Sigmoid colon (tissue), 7 donors: ENCODE measurements at regions of chr19 and their contacts with region 1.

Region 1: GRCh38 chr19:45423589-45424190 is at the start of gene ERCC1:
- DNase-seq: peak; percentile 98
- H3K4me3 ChIP-seq: peak within 1 kb of the TSS; percentile 55 to 73 (median 61)
- H3K27ac ChIP-seq: peak within 1 kb of the TSS; percentile 80 to 92 (median 90)
- H3K4me1 ChIP-seq: peaks cover 0 to 41% (median 23%) of the 10 kb centered on the region in 4 donors
- H3K27me3 ChIP-seq: no peaks in the 10 kb centered on the region
- CTCF ChIP-seq: no peak
- EP300 ChIP-seq: no peak
- POLR2A ChIP-seq: peak; percentile 28 to 73
- total RNA-seq, gene ERCC1: 41.8 to 67.0 (median 64.4) TPM

Region 2: DNA sequence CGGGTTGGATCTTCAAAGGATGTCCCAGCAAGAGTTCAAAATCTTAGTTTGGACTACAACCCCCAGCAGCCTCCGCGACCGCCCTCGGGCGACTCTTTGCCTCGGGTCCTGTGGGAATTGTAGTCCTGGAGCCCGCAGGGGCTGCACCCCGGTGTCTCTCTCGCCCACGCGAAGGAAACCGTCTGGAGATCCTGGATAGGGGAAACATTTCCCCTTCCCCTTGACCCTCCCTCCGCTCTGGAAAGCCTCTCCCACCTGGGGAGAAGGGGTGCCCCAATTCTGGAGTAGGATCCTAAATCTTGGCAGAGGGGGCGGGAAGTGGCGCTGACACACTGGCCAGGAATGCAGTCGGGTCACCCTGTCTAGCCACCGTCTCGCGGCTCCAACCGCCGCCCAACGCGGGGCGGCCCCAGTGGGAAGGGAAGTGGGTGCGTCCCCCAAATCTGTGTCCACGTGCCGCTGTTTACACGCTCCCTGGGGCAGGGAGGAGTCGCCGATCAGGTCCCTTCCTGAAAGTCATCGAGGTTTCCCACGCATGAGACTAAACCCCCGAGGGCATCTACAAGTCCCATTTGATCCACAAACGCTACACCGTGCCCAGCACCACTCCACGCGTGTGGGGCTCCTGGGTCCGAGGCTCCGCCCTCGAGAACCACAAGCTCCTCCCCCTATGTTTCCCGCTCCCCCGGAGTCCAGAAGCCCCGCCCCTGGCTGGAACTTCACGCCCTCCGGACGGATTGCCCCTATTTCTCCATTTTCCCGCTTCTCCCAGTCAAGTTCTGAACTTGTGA is 18.1 kb before region 1 on chr19:
- intact Hi-C with region 1: loop called (anchors 2 kb)
- DNase-seq: peak; percentile 94
- H3K4me3 ChIP-seq: peak overlapping the region; percentile 48 to 67 (median 63)
- H3K27ac ChIP-seq: peak overlapping the region; percentile 85 to 95 (median 90)
- H3K4me1 ChIP-seq: peaks cover 2 to 38% (median 27%) of the 10 kb centered on the region in 4 donors
- H3K27me3 ChIP-seq: peaks cover 6 to 18% (median 9%) of the 10 kb centered on the region in 3 donors
- CTCF ChIP-seq: no peak
- EP300 ChIP-seq: no peak
- POLR2A ChIP-seq: peak in 1 of 2 donors; percentile 12

Region 3: GRCh38 chr19:45506246-45506990 is 82.7 kb after region 1 on chr19:
- intact Hi-C with region 1: no loop called
- DNase-seq: peak; percentile 98
- H3K4me3 ChIP-seq: peak overlapping the region; percentile 83 to 100 (median 100)
- H3K27ac ChIP-seq: peak overlapping the region; percentile 94 to 99 (median 98)
- H3K4me1 ChIP-seq: peaks cover 0 to 26% (median 24%) of the 10 kb centered on the region in 4 donors
- H3K27me3 ChIP-seq: peaks cover 0 to 4% (median 0%) of the 10 kb centered on the region in 3 donors
- CTCF ChIP-seq: peak in 1 of 4 experiments; percentile 26
- EP300 ChIP-seq: peak in 1 of 4 donors; percentile 1
- POLR2A ChIP-seq: peak; percentile 86 to 94